Activated CD4-positive, alpha-beta T cell treated with anti-CD3 and anti-CD28 coated beads for 36 hours (primary cell): ENCODE measurements at regions of chr12 and their contacts with region 1.

Region 1: DNA sequence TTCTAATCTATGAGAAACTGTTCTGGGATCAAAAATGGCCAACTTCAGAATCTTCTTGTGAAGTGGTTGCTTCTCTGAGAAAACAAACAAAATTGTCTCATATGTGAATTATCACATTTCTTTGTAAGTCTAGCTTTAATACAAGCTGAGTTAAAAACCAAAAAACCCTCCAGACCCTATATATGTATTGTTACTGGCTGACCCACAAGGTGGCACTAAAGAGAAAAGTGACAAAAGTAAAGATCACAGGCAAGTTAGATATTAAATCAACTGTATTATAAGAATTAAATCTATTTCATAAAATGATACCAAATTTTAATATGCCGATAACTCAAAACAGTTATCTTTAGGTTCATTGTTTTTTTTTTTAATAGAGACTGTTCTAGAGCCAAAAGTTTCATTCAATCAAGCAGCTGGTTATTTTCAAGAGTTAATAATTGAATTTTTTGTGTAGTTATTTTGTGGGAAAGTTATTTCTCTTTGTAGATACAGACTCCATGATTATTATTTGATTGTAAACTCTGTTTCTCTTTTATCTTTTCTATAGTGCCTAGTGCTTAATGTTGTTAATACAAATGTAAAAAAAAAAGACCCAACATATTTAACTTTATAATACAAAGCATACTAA is 7.5 kb upstream of the TRHDE start:
- DNase-seq: no peak
- ATAC-seq: no peak
- H3K4me3 Mint-ChIP-seq: no peak overlapping the region
- H3K27ac Mint-ChIP-seq: no peak overlapping the region
- H3K4me1 Mint-ChIP-seq: no peaks in the 10 kb centered on the region
- H3K27me3 Mint-ChIP-seq: peaks cover 6% of the 10 kb centered on the region

Region 2: DNA sequence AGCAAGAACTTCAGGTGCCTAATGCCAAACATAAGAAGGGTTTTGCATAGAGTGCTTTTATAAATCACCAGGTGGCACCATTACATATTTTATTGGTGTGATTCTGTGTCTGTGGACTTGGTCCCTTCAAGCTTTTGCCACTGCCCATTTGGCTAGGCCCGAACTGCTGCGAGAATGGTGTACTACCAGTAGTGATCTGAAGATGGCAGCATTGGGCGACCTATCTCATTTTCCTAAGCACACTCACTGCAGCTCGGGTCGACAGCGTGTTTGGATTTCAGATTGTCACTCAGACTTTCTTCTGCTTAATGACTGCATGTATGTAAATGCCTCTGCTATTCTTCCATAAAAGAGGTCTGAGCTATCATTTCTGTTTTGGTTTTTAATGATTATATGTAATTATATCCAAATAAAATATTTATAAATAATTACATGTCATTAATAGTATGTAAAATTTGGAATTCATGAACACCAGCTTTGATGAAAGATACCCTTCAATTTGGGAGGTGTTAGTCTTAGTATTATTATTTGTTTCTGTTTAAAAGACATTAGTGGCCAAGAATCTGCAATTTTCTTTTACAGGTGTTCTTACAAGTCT is 247.5 kb before region 1 on chr12:
- CTCF ChIA-PET with region 1: no interaction called
- POLR2A ChIA-PET with region 1: no interaction called
- intact Hi-C with region 1: loop called in 1 of 2 experiments (anchors 10 kb)
- DNase-seq: peak; percentile 74
- ATAC-seq: peak; percentile 81
- H3K4me3 Mint-ChIP-seq: no peak overlapping the region
- H3K27ac Mint-ChIP-seq: no peak overlapping the region
- H3K4me1 Mint-ChIP-seq: no peaks in the 10 kb centered on the region
- H3K27me3 Mint-ChIP-seq: peaks cover 16% of the 10 kb centered on the region

Region 3: GRCh38 chr12:72289633-72290032 is 25.0 kb after region 1 on chr12:
- CTCF ChIA-PET with region 1: no interaction called
- POLR2A ChIA-PET with region 1: no interaction called
- intact Hi-C with region 1: no loop called
- DNase-seq: no peak
- ATAC-seq: no peak
- H3K4me3 Mint-ChIP-seq: no peak overlapping the region
- H3K27ac Mint-ChIP-seq: no peak overlapping the region
- H3K4me1 Mint-ChIP-seq: no peaks in the 10 kb centered on the region
- H3K27me3 Mint-ChIP-seq: peaks cover 1% of the 10 kb centered on the region

Region 4: DNA sequence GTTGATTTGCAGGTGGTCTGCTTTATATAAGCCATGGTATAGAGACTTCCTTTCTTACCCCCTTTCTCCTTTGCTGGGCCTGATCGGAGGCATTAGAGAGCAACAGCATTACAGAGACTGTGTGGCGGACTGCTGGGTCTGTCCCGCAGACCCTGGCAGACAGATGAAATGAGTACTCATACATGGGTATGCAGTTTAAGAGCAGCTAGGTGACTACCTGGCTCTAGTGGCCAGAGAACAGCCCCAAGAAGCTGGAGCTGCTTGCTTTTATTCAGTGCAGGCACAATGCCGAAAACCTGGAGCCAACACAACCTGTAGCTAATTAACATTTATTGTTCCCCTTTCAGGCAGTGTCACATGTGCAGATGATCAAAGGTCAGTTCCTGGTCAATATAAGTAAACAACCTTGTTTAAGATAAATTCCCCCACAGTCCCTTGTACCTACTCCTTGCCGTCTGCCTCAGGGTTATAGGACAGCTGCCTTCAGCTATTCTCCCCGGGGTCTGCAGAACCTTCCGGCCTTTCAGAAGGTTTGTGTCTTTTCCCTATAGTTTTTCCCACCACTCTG is 167.5 kb after region 1 on chr12:
- CTCF ChIA-PET with region 1: no interaction called
- POLR2A ChIA-PET with region 1: no interaction called
- intact Hi-C with region 1: no loop called
- DNase-seq: no peak
- ATAC-seq: no peak
- H3K4me3 Mint-ChIP-seq: no peak overlapping the region
- H3K27ac Mint-ChIP-seq: no peak overlapping the region
- H3K4me1 Mint-ChIP-seq: no peaks in the 10 kb centered on the region
- H3K27me3 Mint-ChIP-seq: no peaks in the 10 kb centered on the region